B cell (primary cell): ENCODE measurements at regions of chr21 and their contacts with region 1.

Region 1: DNA sequence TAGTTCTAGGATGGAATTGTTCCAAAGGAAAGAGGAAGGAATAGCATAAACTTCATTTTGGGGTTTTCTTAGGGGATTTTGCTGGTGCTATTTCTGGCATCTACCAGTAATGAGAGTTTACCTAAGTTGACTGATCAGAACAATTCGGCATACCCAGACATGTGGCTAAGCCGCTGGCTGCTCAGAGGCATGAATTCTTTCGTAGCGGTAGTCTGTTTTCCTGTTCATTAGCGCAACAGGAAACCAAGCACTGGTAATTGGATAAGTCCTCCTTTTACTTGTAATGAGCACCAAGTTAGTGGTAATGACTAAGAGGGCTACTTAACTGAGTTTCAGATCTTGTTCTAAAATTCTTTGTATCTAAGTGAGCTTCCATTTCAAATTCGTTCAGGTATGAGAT is 38.6 kb downstream of the C21orf91 start:
- DNase-seq: peak; percentile 66
- ATAC-seq: peak; percentile 26
- H3K4me3 ChIP-seq: peak overlapping the region in 1 of 5 experiments; percentile 3
- H3K4me3 Mint-ChIP-seq: peak overlapping the region; percentile 58
- H3K27ac ChIP-seq: no peak overlapping the region
- H3K27ac Mint-ChIP-seq: peak overlapping the region; percentile 66
- H3K4me1 ChIP-seq: peaks cover 59 to 63% of the 10 kb centered on the region in 2 donors
- H3K4me1 Mint-ChIP-seq: peaks cover 72% of the 10 kb centered on the region
- H3K27me3 ChIP-seq: peaks cover 0 to 5% (median 0%) of the 10 kb centered on the region in 4 experiments
- H3K27me3 Mint-ChIP-seq: no peaks in the 10 kb centered on the region
- CTCF ChIP-seq: no peak

Region 2: DNA sequence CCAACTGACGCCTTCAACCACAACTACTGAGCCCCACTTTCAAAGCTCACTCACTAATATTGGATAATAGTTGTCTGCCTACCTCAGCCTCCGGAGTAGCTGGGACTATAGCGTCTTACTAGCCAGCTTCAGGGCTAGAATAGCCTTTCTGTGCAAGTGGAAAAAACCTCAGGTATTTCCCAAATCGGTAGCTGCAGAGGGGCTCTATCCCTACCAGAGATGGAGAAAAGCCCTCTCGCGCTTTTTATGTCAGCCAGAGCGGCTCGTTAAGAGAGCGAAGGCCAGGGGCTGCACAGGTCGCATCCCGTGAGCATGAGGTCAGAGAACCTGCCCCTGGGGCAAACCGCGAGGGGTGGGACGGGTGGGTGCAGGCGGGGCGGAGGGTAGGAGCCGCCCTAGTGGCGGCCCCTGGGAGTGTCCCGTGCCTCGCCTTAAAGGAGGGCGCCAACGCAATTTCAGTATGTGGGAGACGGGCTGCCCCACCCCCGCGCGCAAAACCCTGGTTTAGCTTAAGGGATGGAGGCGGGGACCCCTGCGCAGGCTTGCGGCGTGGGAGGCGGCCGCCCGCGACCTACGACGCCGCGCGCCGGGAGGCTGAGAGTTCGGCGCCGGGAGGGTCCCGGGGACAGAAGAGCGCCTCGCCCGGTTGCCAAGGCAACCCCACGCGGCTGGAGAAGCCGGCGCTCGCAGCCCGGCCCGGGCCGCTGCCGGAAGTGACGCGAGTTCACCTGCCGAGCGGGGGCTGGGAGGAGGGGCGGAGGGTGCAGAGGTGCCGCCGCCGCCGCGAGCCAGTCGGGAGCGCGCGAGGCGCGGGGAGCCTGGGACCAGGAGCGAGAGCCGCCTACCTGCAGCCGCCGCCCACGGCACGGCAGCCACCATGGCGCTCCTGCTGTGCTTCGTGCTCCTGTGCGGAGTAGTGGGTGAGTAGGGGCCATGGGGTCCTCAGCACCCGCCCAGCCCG is 268.0 kb before region 1 on chr21 and contains the start of gene CXADR:
- CTCF ChIA-PET with region 1: no interaction called
- POLR2A ChIA-PET with region 1: no interaction called
- intact Hi-C with region 1: loop called (anchors 5 kb)
- DNase-seq: peak; percentile 71
- ATAC-seq: peak; percentile 68
- H3K4me3 ChIP-seq: peak within 1 kb of the TSS; percentile 21 to 68 (median 54)
- H3K4me3 Mint-ChIP-seq: peak within 1 kb of the TSS; percentile 88
- H3K27ac ChIP-seq: no peak within 1 kb of the TSS
- H3K27ac Mint-ChIP-seq: no peak within 1 kb of the TSS
- H3K4me1 ChIP-seq: peaks cover 14 to 21% of the 10 kb centered on the region in 2 donors
- H3K4me1 Mint-ChIP-seq: peaks cover 17% of the 10 kb centered on the region
- H3K27me3 ChIP-seq: peaks cover 0 to 36% (median 27%) of the 10 kb centered on the region in 4 experiments
- H3K27me3 Mint-ChIP-seq: peaks cover 41% of the 10 kb centered on the region
- CTCF ChIP-seq: peak; percentile 40
- total RNA-seq, gene CXADR: not detected in 2 replicates

Region 3: DNA sequence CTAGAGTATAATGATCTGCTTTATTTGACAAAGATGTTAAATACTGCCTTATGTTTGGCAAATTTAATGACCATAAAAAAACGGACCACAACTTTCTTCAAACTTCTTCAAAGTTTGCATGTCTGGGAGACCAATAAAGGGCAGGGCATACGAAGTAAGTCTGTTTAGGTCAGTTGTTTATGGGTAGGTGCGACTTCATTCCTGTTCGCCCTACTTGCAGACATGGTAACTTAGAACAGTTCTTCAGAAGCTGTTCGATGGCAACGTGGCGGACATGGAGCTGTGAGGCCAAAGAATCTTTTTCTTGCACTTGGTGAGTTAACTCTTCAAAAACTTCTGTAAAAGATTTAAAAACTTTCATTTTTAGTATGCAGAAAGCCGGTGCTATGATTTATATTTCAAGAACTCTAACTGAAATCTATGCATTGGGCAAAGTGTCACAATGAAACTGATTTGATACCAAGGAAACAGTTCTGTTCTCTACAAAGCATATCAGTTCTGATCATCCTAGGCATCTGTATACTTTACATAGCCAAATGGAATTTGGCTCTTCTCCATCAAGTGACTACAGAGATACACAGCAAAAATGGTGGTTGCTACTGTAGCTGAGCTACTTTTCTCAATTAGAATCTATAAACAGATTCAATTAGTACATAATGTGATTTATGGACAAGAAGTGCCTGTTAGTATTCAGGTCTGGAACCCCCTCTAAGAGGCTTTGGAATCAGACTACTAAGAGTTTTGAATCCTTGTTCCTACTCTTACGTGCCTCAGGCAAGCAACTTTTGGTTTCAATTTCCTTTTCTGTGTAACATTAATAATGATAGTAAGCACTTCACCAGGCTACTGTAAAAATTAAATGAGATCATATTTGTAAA is 12.9 kb after region 1 on chr21:
- CTCF ChIA-PET with region 1: interaction called, 6 read pairs
- POLR2A ChIA-PET with region 1: no interaction called
- intact Hi-C with region 1: loop called (anchors 1 kb)
- DNase-seq: peak; percentile 52
- ATAC-seq: peak; percentile 64
- H3K4me3 ChIP-seq: peak overlapping the region in 4 of 5 experiments; percentile 9 to 60 (median 38)
- H3K4me3 Mint-ChIP-seq: peak overlapping the region; percentile 76
- H3K27ac ChIP-seq: peak overlapping the region; percentile 29 to 70
- H3K27ac Mint-ChIP-seq: peak overlapping the region; percentile 70
- H3K4me1 ChIP-seq: peaks cover 18 to 25% of the 10 kb centered on the region in 2 donors
- H3K4me1 Mint-ChIP-seq: peaks cover 47% of the 10 kb centered on the region
- H3K27me3 ChIP-seq: no peaks in the 10 kb centered on the region
- H3K27me3 Mint-ChIP-seq: no peaks in the 10 kb centered on the region
- CTCF ChIP-seq: no peak